ENCODE measurements at regions of chr1 and their contacts with region 1.

Region 1: GRCh38 chr1:39799770-39800470 is 11.3 kb upstream of the BMP8B start:
- DNase-seq: peak; percentile 82
- H3K4me3 ChIP-seq: no peak overlapping the region
- H3K27ac ChIP-seq: peak overlapping the region; percentile 43
- H3K4me1 ChIP-seq: peaks cover 14% of the 10 kb centered on the region
- H3K27me3 ChIP-seq: no peaks in the 10 kb centered on the region
- CTCF ChIP-seq: peak; percentile 72 to 81

Region 2: GRCh38 chr1:39596163-39596562 is 203.8 kb before region 1 on chr1:
- CTCF ChIA-PET with region 1: no interaction called
- dilution Hi-C with region 1: no loop called
- in situ Hi-C with region 1: no loop called
- intact Hi-C with region 1: loop called (anchors 2 kb)
- DNase-seq: no peak
- H3K4me3 ChIP-seq: no peak overlapping the region
- H3K27ac ChIP-seq: no peak overlapping the region
- H3K4me1 ChIP-seq: no peaks in the 10 kb centered on the region
- H3K27me3 ChIP-seq: no peaks in the 10 kb centered on the region
- CTCF ChIP-seq: no peak

Region 3: DNA sequence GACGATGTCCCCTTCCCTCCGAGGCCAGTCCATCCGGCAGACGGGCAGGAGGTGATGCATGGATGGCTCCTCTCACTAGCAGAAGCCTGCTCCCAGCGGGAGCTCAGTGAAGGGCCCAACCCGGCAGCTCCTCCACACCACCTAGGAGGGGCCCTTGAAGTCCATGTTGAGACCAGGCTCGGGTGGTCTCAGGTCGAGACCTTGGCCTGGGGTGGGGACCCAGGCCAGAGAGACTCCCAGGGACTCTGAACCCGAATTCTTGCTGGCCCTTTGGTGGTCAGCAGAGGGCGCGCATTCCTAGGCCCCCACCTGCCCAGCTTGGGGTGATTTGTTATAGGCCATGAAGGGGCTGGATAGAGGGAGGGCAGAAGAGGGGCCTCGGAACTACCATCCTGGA is 127.4 kb before region 1 on chr1:
- CTCF ChIA-PET with region 1: interaction called, 7 read pairs
- dilution Hi-C with region 1: loop called (anchors 5 kb)
- in situ Hi-C with region 1: no loop called
- intact Hi-C with region 1: no loop called
- DNase-seq: no peak
- H3K4me3 ChIP-seq: no peak overlapping the region
- H3K27ac ChIP-seq: no peak overlapping the region
- H3K4me1 ChIP-seq: peaks cover 18% of the 10 kb centered on the region
- H3K27me3 ChIP-seq: peaks cover 19% of the 10 kb centered on the region
- CTCF ChIP-seq: peak in 1 of 2 donors; percentile 11

Region 4: GRCh38 chr1:39835935-39836594 is 36.1 kb after region 1 on chr1:
- CTCF ChIA-PET with region 1: no interaction called
- dilution Hi-C with region 1: loop called (anchors 5 kb)
- in situ Hi-C with region 1: no loop called
- intact Hi-C with region 1: no loop called
- DNase-seq: no peak
- H3K4me3 ChIP-seq: no peak overlapping the region
- H3K27ac ChIP-seq: no peak overlapping the region
- H3K4me1 ChIP-seq: no peaks in the 10 kb centered on the region
- H3K27me3 ChIP-seq: no peaks in the 10 kb centered on the region
- CTCF ChIP-seq: no peak

Region 5: GRCh38 chr1:39933956-39934941 is 134.3 kb after region 1 on chr1:
- CTCF ChIA-PET with region 1: interaction called, 3 read pairs
- dilution Hi-C with region 1: loop called (anchors 10 kb)
- in situ Hi-C with region 1: no loop called
- intact Hi-C with region 1: no loop called
- DNase-seq: peak; percentile 97
- H3K4me3 ChIP-seq: no peak overlapping the region
- H3K27ac ChIP-seq: peak overlapping the region; percentile 63
- H3K4me1 ChIP-seq: peaks cover 18% of the 10 kb centered on the region
- H3K27me3 ChIP-seq: no peaks in the 10 kb centered on the region
- CTCF ChIP-seq: no peak

Measured in mammary epithelial cell (primary cell).